PC-9 (cell line): ENCODE measurements at regions of chr11 and their contacts with region 1.

Region 1: DNA sequence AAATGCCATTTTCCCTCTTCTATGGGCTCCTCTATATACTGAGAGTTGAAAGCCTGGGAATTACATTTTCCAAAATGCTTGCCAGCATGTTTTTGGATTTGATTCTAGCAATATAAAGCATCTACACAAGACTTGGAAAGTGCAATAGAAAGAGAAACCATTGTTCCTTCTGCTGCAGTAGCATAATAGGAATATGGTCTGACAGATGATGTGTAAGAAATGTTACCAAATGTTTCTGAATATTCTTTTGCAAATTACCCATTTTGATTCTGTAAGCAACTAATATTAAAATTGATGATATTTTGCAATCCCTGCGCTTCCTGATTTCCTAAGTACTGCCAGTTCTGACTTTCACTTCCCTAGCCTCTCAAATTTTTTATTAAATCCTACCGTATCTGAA is 61.6 kb downstream of the CASP12 start:
- DNase-seq: no peak
- H3K4me3 ChIP-seq: no peak overlapping the region
- H3K27ac ChIP-seq: no peak overlapping the region
- H3K4me1 ChIP-seq: no peaks in the 10 kb centered on the region
- H3K27me3 ChIP-seq: no peaks in the 10 kb centered on the region
- CTCF ChIP-seq: no peak

Region 2: DNA sequence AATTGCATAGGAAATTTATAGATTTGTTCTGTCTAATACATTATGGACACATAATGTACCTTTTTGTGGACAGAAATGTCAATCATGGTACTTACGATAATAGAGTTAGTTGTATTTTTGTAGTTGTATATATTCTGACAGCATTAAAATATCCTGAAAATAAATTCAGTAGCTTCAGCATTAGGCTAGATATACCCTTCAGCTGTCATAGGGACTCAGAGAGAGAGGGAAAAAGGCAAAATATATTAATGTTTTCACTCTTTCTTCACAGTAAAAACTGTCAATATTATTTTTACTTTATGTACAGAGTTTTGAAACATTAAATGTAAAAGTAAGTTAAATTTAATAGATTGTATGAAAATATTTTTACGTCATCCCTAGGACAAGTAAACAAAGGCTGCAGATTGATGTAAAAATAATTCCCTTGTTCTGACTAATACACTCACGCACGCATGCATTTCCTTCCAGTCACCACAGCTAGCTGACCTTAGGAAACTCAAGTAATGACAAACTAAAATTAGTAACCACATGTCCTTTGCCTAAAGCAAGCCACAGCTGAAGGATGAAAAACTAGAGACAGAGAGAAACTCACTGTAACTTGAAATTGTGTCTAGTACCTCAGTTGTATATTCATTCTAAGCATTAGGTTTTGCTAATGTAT is 407.6 kb after region 1 on chr11:
- CTCF ChIA-PET with region 1: interaction called, 12 read pairs
- POLR2A ChIA-PET with region 1: no interaction called
- intact Hi-C with region 1: no loop called
- DNase-seq: peak; percentile 35 to 78
- H3K4me3 ChIP-seq: no peak overlapping the region
- H3K27ac ChIP-seq: peak overlapping the region; percentile 42
- H3K4me1 ChIP-seq: peaks cover 16% of the 10 kb centered on the region
- H3K27me3 ChIP-seq: no peaks in the 10 kb centered on the region
- CTCF ChIP-seq: no peak